H1 (cell line): ENCODE measurements at regions of chr1 and their contacts with region 1.

Region 1: DNA sequence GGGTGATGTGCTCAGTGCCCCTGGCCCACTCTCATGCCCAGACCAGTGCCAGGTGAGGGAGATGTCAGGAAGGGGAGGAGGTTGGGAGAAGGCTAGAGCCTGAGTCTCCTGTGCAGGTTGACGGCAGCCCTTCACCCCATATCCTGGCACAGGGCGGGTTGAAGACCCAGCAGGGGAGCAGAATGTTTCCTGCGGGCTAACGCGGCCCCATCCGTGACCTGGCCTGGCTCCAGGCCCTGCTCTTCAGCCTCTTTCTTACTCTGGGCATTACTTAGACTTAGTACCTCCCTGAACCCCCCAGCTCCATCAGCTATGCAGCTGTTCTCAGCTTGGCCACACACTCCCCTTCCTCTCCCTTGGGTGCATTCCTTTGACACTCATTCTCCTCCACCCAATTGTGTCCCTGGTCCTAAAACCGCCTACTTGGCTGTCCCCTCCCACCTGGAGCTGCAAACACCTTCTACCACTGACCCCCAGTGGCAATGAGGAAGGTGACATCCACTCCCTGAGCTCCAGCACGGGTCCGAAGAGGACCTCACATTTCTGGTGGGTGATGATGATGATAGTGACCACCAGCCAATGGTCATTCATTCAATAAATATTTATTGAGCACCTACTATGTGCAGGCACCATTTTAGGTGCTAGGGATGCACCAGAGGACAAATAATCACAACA is 179.0 kb downstream of the PTPRU start:
- DNase-seq: peak in 1 of 2 experiments; percentile 52
- H3K4me3 ChIP-seq: no peak overlapping the region
- H3K27ac ChIP-seq: no peak overlapping the region
- H3K4me1 ChIP-seq: peaks cover 0 to 5% (median 0%) of the 10 kb centered on the region in 4 experiments; a peak in 2 of 7 replicates
- H3K27me3 ChIP-seq: no peaks in the 10 kb centered on the region
- CTCF ChIP-seq: peak; percentile 45 to 58 (median 46)
- EP300 ChIP-seq: no peak
- POLR2A ChIP-seq: no peak
- RAD21 ChIP-seq: peak; percentile 64 to 75

Region 2: DNA sequence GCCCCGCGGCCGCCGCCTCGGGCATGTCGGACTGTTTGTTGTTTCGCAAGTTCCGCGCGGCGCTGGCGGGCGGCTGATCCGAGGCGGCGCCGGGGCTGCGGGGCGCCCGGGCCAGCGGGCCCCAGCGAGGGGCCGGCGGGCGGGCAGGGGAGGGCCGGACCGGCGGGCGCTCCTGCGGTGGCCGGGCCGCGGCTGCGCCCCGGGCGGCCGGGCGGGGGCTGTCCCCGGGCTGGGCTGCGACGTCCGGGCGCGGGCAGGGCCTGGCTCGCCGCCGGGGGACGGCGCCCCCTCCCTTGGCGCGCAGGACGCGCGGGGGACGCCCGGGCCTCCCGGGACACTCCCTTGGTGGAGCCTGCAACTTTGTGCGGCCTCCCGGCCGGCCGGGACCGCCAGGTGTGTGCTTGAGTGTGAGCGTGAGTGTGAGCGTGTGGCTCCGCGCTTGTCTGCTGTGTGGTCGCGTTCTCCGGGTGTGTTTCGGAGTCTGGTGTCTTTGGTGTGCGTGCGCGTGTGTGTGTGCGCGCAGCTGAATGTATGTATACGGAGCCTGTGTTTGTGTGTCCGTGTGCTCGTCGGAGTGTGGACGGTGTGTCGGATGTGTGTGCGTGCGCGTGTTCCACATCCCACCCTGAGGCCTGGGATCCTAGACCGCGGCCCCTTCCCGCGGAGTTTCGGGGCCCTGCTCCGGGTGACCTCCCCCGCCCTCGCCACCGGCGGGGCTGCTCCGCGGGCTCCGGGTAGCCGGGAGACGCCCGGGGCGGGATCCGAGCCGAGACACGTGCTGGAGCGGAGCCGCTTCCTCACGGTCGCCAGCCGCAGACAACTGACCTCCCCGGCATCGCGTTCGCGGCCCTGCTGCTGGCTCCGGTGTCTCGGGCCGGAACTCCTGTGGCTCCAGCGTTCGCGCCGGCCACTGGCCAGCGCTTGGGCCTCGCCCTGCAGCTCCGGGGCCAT is 177.3 kb before region 1 on chr1:
- CTCF ChIA-PET with region 1: interaction called, 14 read pairs
- POLR2A ChIA-PET with region 1: no interaction called
- DNase-seq: peak in 1 of 2 experiments; percentile 72
- H3K4me3 ChIP-seq: peak overlapping the region; percentile 58 to 68 (median 60)
- H3K27ac ChIP-seq: no peak overlapping the region
- H3K4me1 ChIP-seq: peaks cover 10 to 33% (median 24%) of the 10 kb centered on the region in 4 experiments
- H3K27me3 ChIP-seq: peaks cover 13 to 34% (median 29%) of the 10 kb centered on the region in 4 experiments
- CTCF ChIP-seq: no peak
- EP300 ChIP-seq: no peak
- POLR2A ChIP-seq: no peak
- RAD21 ChIP-seq: no peak

Region 3: GRCh38 chr1:29379443-29380073 is 35.7 kb before region 1 on chr1:
- CTCF ChIA-PET with region 1: interaction called, 17 read pairs
- POLR2A ChIA-PET with region 1: no interaction called
- DNase-seq: peak; percentile 44 to 68
- H3K4me3 ChIP-seq: no peak overlapping the region
- H3K27ac ChIP-seq: no peak overlapping the region
- H3K4me1 ChIP-seq: no peaks in the 10 kb centered on the region; a peak in 1 of 7 replicates
- H3K27me3 ChIP-seq: no peaks in the 10 kb centered on the region
- CTCF ChIP-seq: peak in 2 of 3 experiments; percentile 91; a peak in 3 of 4 replicates
- EP300 ChIP-seq: no peak
- POLR2A ChIP-seq: no peak
- RAD21 ChIP-seq: peak; percentile 99 to 100

Region 4: DNA sequence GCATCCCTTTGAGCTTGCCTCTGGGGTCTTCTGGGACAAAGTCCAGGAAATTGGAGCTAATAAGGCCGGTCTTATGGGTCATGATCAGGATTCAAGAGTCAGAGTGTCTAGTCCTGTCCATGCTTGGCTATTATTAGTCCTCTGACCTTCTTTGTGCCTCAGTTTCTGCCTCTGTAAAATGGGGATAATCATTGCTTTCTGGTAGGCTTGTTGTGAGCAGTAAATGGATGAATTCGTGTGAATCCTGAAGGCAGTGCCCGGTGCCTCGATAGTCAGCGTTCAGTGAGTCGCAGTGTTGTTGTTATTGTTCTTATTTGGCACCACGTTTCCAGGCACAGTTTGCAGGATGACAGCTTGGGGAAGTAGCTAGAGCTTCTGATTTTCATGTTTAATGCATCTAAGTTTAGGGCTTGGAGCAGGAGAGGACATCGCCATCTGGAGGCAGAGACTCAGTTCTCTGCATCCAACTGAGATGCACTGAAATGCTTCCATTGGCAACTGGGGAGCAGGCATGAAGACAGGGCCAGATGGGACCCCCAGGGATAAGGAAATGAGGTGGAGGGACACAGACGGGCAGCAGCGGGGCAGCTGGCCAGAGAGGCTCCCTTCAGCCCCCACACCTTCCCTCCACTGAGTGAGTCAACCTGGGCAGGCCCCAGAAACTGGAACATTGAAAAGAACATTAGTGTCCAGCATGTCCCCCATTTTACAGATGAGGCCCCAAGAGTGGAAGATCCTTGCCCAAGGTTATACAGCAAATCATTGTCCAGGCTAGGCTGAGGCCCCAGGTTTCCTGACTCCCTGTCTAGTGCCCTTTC is 18.6 kb before region 1 on chr1:
- CTCF ChIA-PET with region 1: interaction called, 15 read pairs
- POLR2A ChIA-PET with region 1: no interaction called
- DNase-seq: no peak
- H3K4me3 ChIP-seq: no peak overlapping the region
- H3K27ac ChIP-seq: no peak overlapping the region
- H3K4me1 ChIP-seq: 0 out of 7 replicates have a peak, but pooled peaks cover 0 to 2% (median 0%) of the 10 kb centered on the region in 4 experiments
- H3K27me3 ChIP-seq: no peaks in the 10 kb centered on the region
- CTCF ChIP-seq: peak; percentile 41 to 61 (median 58)
- EP300 ChIP-seq: no peak
- POLR2A ChIP-seq: no peak
- RAD21 ChIP-seq: peak; percentile 38 to 53; a peak in 3 of 4 replicates

Region 5: GRCh38 chr1:29439615-29440014 is 24.3 kb after region 1 on chr1:
- CTCF ChIA-PET with region 1: interaction called, 12 read pairs
- POLR2A ChIA-PET with region 1: interaction called, 3 read pairs
- DNase-seq: no peak
- H3K4me3 ChIP-seq: no peak overlapping the region
- H3K27ac ChIP-seq: no peak overlapping the region
- H3K4me1 ChIP-seq: peaks cover 3 to 14% (median 9%) of the 10 kb centered on the region in 4 experiments
- H3K27me3 ChIP-seq: no peaks in the 10 kb centered on the region
- CTCF ChIP-seq: no peak
- EP300 ChIP-seq: no peak
- POLR2A ChIP-seq: no peak
- RAD21 ChIP-seq: no peak